ENCODE measurements at regions of chr4 and their contacts with region 1.

Region 1: GRCh38 chr4:102430461-102430910 is 70.7 kb upstream of the NFKB1 start:
- DNase-seq: no peak
- H3K4me3 ChIP-seq: peak overlapping the region; percentile 81
- H3K27ac ChIP-seq: peak overlapping the region; percentile 85
- H3K4me1 ChIP-seq: peaks cover 21% of the 10 kb centered on the region
- H3K27me3 ChIP-seq: no peaks in the 10 kb centered on the region
- CTCF ChIP-seq: no peak

Region 2: DNA sequence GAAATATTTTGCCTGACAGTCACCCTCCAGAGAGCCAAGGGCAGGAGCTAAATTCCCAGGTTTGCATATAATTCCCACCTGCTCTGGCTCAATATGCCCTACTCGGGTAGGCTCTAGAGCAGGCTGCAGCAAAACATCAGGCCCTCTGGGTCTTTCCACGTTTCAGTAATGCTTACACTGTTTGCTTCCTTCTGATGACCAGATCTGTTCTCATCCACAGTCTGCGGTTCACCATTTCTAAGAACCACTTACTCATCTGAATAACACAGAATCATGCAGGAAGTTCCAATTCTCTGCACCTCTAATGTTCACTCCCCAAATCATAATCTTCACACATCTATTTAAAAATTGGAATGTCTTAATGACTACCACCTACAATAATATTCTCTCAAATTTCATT is 1224.6 kb before region 1 on chr4:
- CTCF ChIA-PET with region 1: interaction called, 11 read pairs
- POLR2A ChIA-PET with region 1: no interaction called
- intact Hi-C with region 1: no loop called
- DNase-seq: no peak
- H3K4me3 ChIP-seq: no peak overlapping the region
- H3K27ac ChIP-seq: no peak overlapping the region
- H3K4me1 ChIP-seq: no peaks in the 10 kb centered on the region
- H3K27me3 ChIP-seq: no peaks in the 10 kb centered on the region
- CTCF ChIP-seq: no peak

Region 3: DNA sequence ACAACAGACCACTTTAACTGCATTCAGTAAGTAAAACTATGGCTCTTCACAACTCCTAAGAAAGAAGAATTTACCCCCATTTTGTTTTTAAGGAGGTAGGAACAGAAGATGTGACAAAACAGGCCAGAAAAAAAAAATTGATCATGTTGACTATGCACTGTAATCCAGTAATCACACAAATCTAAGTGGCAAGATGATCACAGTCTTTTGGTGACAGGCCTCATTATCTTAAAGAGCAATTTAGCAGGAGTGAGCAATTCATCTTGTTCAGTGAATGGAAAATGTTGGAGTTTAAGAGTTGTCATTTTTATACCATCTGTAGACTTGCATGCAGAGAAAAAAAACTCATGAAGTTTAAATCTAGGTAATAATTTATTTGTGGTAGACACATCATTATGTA is 200.3 kb before region 1 on chr4:
- CTCF ChIA-PET with region 1: no interaction called
- POLR2A ChIA-PET with region 1: no interaction called
- intact Hi-C with region 1: no loop called
- DNase-seq: no peak
- H3K4me3 ChIP-seq: no peak overlapping the region
- H3K27ac ChIP-seq: no peak overlapping the region
- H3K4me1 ChIP-seq: no peaks in the 10 kb centered on the region
- H3K27me3 ChIP-seq: no peaks in the 10 kb centered on the region
- CTCF ChIP-seq: no peak

Region 4: GRCh38 chr4:102247041-102247440 is 183.4 kb before region 1 on chr4:
- CTCF ChIA-PET with region 1: interaction called, 15 read pairs
- POLR2A ChIA-PET with region 1: no interaction called
- intact Hi-C with region 1: no loop called
- DNase-seq: no peak
- H3K4me3 ChIP-seq: no peak overlapping the region
- H3K27ac ChIP-seq: 0 out of 2 replicates have a peak overlapping the region, but pooled peaks have one; percentile 7
- H3K4me1 ChIP-seq: peaks cover 13% of the 10 kb centered on the region
- H3K27me3 ChIP-seq: no peaks in the 10 kb centered on the region
- CTCF ChIP-seq: no peak

Region 5: GRCh38 chr4:102318105-102318504 is 112.4 kb before region 1 on chr4:
- CTCF ChIA-PET with region 1: interaction called, 12 read pairs
- POLR2A ChIA-PET with region 1: no interaction called
- intact Hi-C with region 1: no loop called
- DNase-seq: no peak
- H3K4me3 ChIP-seq: no peak overlapping the region
- H3K27ac ChIP-seq: no peak overlapping the region
- H3K4me1 ChIP-seq: no peaks in the 10 kb centered on the region; the same call in 1 of the 2 replicates
- H3K27me3 ChIP-seq: no peaks in the 10 kb centered on the region
- CTCF ChIP-seq: no peak

Region 6: DNA sequence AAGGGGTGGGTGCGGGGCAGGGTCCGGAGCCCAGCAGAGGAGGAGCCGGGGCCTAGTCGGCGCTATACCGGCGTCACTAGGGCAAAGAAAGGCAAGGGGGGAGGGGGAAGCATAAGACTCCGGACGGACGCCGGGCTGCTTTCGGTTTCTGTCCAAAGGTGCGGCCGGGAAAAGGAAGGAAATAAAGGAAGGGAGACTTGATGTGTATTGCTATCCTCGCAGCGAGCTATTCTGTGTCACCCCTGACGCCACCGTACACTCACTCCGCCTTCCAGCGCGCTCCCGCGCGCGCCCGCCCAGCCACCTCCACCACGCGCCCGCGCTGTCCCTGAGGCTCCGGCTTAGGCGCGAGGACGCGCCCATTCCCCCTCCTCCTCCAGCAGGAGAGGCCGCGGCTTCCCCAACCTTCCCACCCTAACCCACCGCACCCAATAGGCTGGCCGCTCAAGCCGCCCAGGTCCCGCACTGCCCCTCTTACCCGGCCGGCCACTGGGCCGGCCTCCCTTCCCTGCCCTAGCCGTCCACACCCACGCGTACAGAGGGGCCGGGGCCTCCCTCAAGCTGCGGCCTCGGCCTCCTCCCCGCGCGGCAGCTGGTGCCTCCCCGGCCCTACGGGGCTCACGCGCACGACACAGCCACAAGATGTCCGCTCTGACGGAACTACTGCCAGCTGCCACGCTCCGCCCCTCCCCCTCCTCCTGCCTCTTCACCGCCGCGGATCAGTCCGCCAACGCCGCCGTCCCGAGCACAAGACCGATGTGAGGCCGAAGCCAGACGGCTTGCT is 396.6 kb after region 1 on chr4 and contains the start of gene UBE2D3:
- CTCF ChIA-PET with region 1: no interaction called
- POLR2A ChIA-PET with region 1: no interaction called
- intact Hi-C with region 1: loop called (anchors 5 kb)
- DNase-seq: peak; percentile 75 to 85
- H3K4me3 ChIP-seq: peak within 1 kb of the TSS; percentile 95
- H3K27ac ChIP-seq: peak within 1 kb of the TSS; percentile 99
- H3K4me1 ChIP-seq: peaks cover 38% of the 10 kb centered on the region
- H3K27me3 ChIP-seq: no peaks in the 10 kb centered on the region
- CTCF ChIP-seq: no peak
- total RNA-seq, gene UBE2D3: 154 and 183 TPM in 2 replicates

Region 7: GRCh38 chr4:103032574-103032973 is 602.1 kb after region 1 on chr4:
- CTCF ChIA-PET with region 1: interaction called, 10 read pairs
- POLR2A ChIA-PET with region 1: no interaction called
- intact Hi-C with region 1: no loop called
- DNase-seq: peak; percentile 22 to 34
- H3K4me3 ChIP-seq: no peak overlapping the region
- H3K27ac ChIP-seq: no peak overlapping the region
- H3K4me1 ChIP-seq: no peaks in the 10 kb centered on the region
- H3K27me3 ChIP-seq: no peaks in the 10 kb centered on the region
- CTCF ChIP-seq: peak; percentile 48; the same call in 1 of the 2 replicates

Region 8: DNA sequence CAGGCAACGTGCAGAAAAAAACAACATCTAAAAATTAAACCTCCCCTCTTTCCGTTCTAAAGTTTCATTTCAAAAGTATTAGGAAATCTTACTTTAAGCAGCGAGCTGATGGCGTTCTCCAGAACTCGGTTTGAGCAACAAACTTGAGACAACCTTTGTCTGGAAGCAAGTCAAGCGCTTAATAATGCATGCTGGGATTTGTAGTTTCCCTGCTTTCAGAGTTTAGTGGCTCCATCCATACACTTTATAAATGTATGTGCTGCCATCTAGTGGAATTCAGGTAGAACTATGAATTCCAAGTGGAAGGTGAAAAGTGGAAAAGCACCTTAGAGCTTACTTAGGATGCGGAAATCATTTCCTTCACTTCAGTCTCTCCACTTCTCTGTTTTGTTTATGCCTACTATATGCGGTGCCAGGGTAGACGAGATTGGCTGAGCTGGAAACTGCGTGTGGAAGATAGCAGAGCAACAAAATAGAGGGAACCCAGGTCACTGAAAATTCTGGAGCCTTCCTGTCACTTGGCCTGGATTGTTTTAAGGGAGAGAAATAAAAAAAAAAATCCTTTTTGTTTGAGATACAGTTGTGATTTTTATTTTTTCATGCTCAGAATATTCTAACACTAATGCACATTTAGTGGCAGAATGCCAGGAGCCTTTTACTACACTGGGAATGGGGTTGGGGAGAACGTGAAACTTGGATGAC is 669.4 kb after region 1 on chr4 and contains the start of gene BDH2:
- CTCF ChIA-PET with region 1: interaction called, 13 read pairs
- POLR2A ChIA-PET with region 1: no interaction called
- intact Hi-C with region 1: loop called (anchors 5 kb)
- DNase-seq: peak; percentile 15 to 84
- H3K4me3 ChIP-seq: peak within 1 kb of the TSS; percentile 52; the same call in 1 of the 2 replicates
- H3K27ac ChIP-seq: no peak within 1 kb of the TSS
- H3K4me1 ChIP-seq: no peaks in the 10 kb centered on the region
- H3K27me3 ChIP-seq: no peaks in the 10 kb centered on the region
- CTCF ChIP-seq: peak; percentile 75
- total RNA-seq, gene BDH2: 9.5 and 10.1 TPM in 2 replicates

Measured in PC-9 (cell line).